ENCODE measurements at regions of chr10 and their contacts with region 1.

Region 1: DNA sequence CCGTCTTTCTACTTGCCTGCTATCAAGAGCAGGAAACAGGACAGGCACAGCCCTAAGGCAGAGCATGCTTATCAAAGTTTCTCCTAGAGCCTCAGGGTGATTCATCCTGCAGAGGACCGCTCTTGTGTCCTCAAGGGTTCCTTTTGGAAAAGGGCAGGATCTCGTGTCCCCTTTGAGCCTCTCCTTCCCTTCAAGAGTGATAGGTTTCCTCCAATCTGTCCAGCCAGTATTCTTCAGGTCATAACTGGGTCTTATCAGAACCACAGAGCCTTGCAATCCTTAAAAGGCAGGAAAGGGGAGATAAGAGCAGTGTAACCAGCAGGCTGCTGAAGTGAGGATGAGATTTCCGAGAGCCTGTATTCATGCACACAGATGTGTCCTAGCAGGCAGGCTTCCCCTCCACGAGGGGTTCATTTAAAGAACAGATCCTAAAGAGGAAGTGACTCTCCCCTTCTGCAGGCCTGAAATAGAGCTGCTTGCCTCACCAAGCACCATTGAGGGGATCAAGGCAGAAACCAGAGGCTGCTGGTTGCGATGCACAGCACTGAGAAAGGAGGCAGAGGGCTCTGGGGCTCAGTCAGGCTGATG is 90.5 kb upstream of the SVIL start:
- DNase-seq: no peak
- ATAC-seq: peak; percentile 91

Region 2: GRCh38 chr10:29642990-29643389 is 82.2 kb before region 1 on chr10:
- intact Hi-C with region 1: loop called (anchors 5 kb)
- DNase-seq: no peak
- ATAC-seq: peak; percentile 81